HCT116 (cell line): ENCODE measurements at regions of chr13 and their contacts with region 1.

Region 1: DNA sequence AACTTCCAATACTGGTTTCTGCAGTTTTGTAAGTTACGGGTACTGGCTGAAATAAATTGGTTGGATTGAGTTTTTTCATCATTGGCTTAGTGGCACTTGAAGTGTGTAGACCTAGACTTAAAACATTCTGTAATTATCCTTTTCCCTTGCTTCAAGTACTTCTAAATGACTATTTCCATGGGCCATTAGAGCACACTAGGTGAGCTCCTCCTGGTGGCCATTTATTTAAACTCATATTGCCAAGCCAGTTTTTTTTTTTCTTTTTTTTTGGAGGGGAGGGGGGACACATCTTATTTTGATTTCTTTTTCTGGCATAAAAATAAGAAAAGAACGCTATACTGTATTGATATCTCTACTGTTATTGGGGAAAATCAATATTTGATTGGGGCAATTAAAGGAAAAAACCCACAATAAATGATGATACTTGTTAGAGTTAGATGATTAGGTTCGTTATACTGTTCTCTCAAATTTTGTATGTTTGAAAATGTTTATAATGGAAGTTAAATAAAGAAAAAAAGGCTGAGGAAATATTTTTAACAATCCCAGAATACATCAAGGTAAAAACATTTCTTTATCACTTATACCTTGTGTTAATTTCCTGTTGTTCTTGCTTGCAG is 82.9 kb downstream of the PDS5B start:
- DNase-seq: peak; percentile 28
- ATAC-seq: peak; percentile 74
- H3K4me3 ChIP-seq: no peak overlapping the region
- H3K27ac ChIP-seq: no peak overlapping the region
- H3K4me1 ChIP-seq: no peaks in the 10 kb centered on the region
- H3K27me3 ChIP-seq: no peaks in the 10 kb centered on the region
- CTCF ChIP-seq: peak; percentile 28 to 82 (median 64); a peak in 4 of 6 replicates
- POLR2A ChIP-seq: no peak
- RAD21 ChIP-seq: peak; percentile 39

Region 2: GRCh38 chr13:31998131-31998530 is 671.0 kb before region 1 on chr13:
- CTCF ChIA-PET with region 1: no interaction called
- POLR2A ChIA-PET with region 1: no interaction called
- RAD21 ChIA-PET with region 1: no interaction called
- intact Hi-C with region 1: no loop called
- DNase-seq: no peak
- ATAC-seq: no peak
- H3K4me3 ChIP-seq: no peak overlapping the region
- H3K27ac ChIP-seq: no peak overlapping the region
- H3K4me1 ChIP-seq: no peaks in the 10 kb centered on the region
- H3K27me3 ChIP-seq: no peaks in the 10 kb centered on the region
- CTCF ChIP-seq: no peak
- POLR2A ChIP-seq: no peak
- RAD21 ChIP-seq: no peak

Region 3: DNA sequence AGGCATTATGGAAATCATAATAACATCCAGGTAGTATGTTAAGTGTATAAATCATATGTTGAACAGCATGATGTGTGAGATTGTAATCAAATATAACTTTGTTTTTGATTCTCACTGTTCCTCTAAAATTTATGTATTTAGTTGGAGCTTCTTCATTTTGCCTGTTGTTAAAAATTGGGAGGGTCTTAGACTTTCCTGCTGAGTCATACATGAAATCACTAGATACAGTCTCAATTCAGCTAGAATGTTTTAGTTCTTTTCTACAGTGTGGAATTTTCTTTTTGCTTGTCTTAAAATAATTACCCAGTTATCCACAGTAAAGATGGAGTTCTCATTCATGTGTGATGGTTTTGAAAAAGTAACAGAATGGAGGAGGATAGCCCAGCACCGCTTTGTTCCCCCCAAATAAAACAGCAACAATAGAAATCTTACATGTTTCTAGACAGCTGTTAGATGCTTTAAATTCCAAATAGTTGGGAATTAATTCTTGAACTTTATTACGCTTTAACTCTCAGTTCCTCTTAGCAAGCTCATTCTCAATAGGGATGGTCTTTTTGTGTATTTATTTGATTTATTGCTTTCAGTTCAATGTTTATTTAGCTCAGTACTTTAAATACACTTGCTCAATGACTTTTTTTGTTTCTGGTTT is 26.6 kb after region 1 on chr13:
- CTCF ChIA-PET with region 1: interaction called, 10 read pairs
- POLR2A ChIA-PET with region 1: no interaction called
- RAD21 ChIA-PET with region 1: no interaction called
- intact Hi-C with region 1: no loop called
- DNase-seq: no peak
- ATAC-seq: no peak
- H3K4me3 ChIP-seq: no peak overlapping the region
- H3K27ac ChIP-seq: no peak overlapping the region
- H3K4me1 ChIP-seq: no peaks in the 10 kb centered on the region
- H3K27me3 ChIP-seq: no peaks in the 10 kb centered on the region
- CTCF ChIP-seq: no peak
- POLR2A ChIP-seq: no peak
- RAD21 ChIP-seq: no peak